ENCODE measurements at regions of chr10 and their contacts with region 1.

Region 1: GRCh38 chr10:2978111-2978510 is 89.2 kb upstream of the PFKP start:
- DNase-seq: no peak
- H3K4me3 Mint-ChIP-seq: no peak overlapping the region
- H3K27ac Mint-ChIP-seq: no peak overlapping the region
- H3K4me1 Mint-ChIP-seq: no peaks in the 10 kb centered on the region
- H3K27me3 Mint-ChIP-seq: peaks cover 2% of the 10 kb centered on the region

Region 2: GRCh38 chr10:2079603-2080078 is 898.5 kb before region 1 on chr10:
- CTCF ChIA-PET with region 1: no interaction called
- intact Hi-C with region 1: loop called (anchors 5 kb)
- DNase-seq: no peak
- H3K4me3 Mint-ChIP-seq: no peak overlapping the region
- H3K27ac Mint-ChIP-seq: no peak overlapping the region
- H3K4me1 Mint-ChIP-seq: no peaks in the 10 kb centered on the region
- H3K27me3 Mint-ChIP-seq: peaks cover 4% of the 10 kb centered on the region

Region 3: GRCh38 chr10:2927958-2928840 is 49.9 kb before region 1 on chr10:
- CTCF ChIA-PET with region 1: interaction called, 11 read pairs
- intact Hi-C with region 1: loop called (anchors 1 kb)
- DNase-seq: peak; percentile 82
- H3K4me3 Mint-ChIP-seq: no peak overlapping the region
- H3K27ac Mint-ChIP-seq: no peak overlapping the region
- H3K4me1 Mint-ChIP-seq: peaks cover 7% of the 10 kb centered on the region
- H3K27me3 Mint-ChIP-seq: peaks cover 23% of the 10 kb centered on the region

Region 4: GRCh38 chr10:2938869-2939268 is 39.2 kb before region 1 on chr10:
- CTCF ChIA-PET with region 1: no interaction called
- intact Hi-C with region 1: loop called (anchors 1 kb)
- DNase-seq: no peak
- H3K4me3 Mint-ChIP-seq: no peak overlapping the region
- H3K27ac Mint-ChIP-seq: no peak overlapping the region
- H3K4me1 Mint-ChIP-seq: no peaks in the 10 kb centered on the region
- H3K27me3 Mint-ChIP-seq: peaks cover 44% of the 10 kb centered on the region

Region 5: DNA sequence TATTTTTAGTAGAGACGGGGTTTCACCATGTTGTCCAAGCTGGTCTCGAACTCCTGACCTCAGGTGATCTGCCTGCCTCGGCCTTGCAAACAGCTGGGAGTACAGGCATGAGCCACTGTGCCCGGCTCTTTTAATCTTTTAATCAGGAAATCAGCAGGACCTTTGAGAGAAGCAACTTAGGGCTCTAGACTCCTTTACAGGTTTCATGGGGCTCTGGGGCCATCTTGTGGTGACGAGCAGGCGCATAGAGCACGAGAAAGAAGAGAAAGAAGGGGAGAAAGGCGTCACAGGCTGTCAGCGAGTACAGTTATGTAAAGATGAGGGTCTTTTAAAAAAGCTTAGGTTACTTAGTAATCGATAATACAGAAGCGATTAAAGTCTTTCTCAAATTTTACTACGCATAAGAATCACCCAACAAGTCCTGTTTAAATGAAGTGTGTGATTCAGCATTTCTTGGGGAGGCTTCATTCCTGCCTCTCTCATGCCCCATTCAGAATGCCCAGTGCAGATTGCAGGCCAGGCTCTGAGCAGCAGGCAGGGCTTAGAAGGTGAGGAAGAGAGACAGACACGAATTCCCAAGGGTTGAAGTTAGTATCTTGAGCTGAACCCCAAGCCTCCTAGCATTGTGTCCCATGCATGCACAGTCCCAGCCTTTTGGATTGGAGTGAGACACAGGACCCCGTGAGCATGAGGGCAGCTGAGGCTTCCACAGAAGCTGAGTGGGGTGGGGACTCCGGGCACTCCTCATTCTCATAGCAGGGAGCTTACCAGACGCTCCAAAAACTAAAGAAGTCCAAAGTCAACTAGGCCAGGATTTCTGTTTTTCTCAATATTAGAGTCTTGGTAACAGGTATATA is 65.6 kb after region 1 on chr10:
- CTCF ChIA-PET with region 1: interaction called, 5 read pairs
- intact Hi-C with region 1: loop called (anchors 2 kb)
- DNase-seq: peak; percentile 74
- H3K4me3 Mint-ChIP-seq: no peak overlapping the region
- H3K27ac Mint-ChIP-seq: no peak overlapping the region
- H3K4me1 Mint-ChIP-seq: peaks cover 2% of the 10 kb centered on the region
- H3K27me3 Mint-ChIP-seq: peaks cover 2% of the 10 kb centered on the region

Measured in activated naive CD4-positive, alpha-beta T cell treated with anti-CD3 and anti-CD28 coated beads for 36 hours (primary cell).